ENCODE measurements at regions of chr5 and their contacts with region 1.

Region 1: GRCh38 chr5:146221234-146221633 is 17.8 kb downstream of the RBM27 start:
- DNase-seq: no peak
- ATAC-seq: no peak
- H3K4me3 ChIP-seq: no peak overlapping the region
- H3K4me3 Mint-ChIP-seq: no peak overlapping the region
- H3K27ac ChIP-seq: no peak overlapping the region
- H3K27ac Mint-ChIP-seq: no peak overlapping the region
- H3K4me1 ChIP-seq: peaks cover 0 to 4% of the 10 kb centered on the region in 2 donors
- H3K4me1 Mint-ChIP-seq: peaks cover 5 to 32% (median 25%) of the 10 kb centered on the region in 7 donors
- H3K27me3 ChIP-seq: no peaks in the 10 kb centered on the region
- H3K27me3 Mint-ChIP-seq: no peaks in the 10 kb centered on the region

Region 2: DNA sequence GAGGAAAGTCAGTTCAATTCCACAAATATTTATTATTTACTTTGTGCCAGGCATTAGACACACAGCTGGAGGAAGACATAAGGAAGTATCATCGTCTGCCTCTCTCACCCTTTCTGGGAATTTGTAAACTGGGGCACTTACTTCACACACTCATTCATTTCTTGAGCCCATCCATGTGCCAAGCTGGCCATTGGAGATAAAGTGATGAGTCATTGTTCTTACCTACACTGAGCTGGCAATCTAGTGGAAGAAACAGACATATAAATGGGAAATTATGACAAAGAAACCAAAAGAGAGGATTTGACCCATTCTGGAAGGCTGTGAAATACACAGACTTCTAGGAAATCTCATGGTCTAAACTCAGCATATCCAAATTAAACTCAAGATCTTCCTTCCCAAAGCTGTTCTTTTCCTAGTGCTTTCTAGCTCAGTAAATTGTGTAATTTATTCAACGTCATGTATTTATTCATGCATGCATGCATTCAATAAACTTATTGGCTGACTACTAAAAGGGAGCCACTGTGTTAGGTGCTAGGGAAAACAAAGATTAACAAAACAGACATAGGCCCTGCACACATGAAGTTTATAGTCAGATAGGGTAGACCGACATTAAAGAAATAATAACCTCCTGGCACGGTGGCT is 219.6 kb before region 1 on chr5:
- CTCF ChIA-PET with region 1: no interaction called
- POLR2A ChIA-PET with region 1: no interaction called
- intact Hi-C with region 1: no loop called
- DNase-seq: no peak
- ATAC-seq: no peak
- H3K4me3 ChIP-seq: no peak overlapping the region
- H3K4me3 Mint-ChIP-seq: no peak overlapping the region
- H3K27ac ChIP-seq: no peak overlapping the region
- H3K27ac Mint-ChIP-seq: no peak overlapping the region
- H3K4me1 ChIP-seq: no peaks in the 10 kb centered on the region
- H3K4me1 Mint-ChIP-seq: no peaks in the 10 kb centered on the region
- H3K27me3 ChIP-seq: no peaks in the 10 kb centered on the region
- H3K27me3 Mint-ChIP-seq: peaks cover 7 to 16% (median 12%) of the 10 kb centered on the region in 5 donors

Region 3: GRCh38 chr5:146165460-146165859 is 55.8 kb before region 1 on chr5:
- CTCF ChIA-PET with region 1: no interaction called
- POLR2A ChIA-PET with region 1: no interaction called
- intact Hi-C with region 1: loop called in 1 of 2 experiments (anchors 5 kb)
- DNase-seq: no peak
- ATAC-seq: no peak
- H3K4me3 ChIP-seq: no peak overlapping the region
- H3K4me3 Mint-ChIP-seq: no peak overlapping the region
- H3K27ac ChIP-seq: no peak overlapping the region
- H3K27ac Mint-ChIP-seq: no peak overlapping the region
- H3K4me1 ChIP-seq: no peaks in the 10 kb centered on the region
- H3K4me1 Mint-ChIP-seq: peaks cover 0 to 15% (median 8%) of the 10 kb centered on the region in 7 donors
- H3K27me3 ChIP-seq: no peaks in the 10 kb centered on the region
- H3K27me3 Mint-ChIP-seq: no peaks in the 10 kb centered on the region

Region 4: DNA sequence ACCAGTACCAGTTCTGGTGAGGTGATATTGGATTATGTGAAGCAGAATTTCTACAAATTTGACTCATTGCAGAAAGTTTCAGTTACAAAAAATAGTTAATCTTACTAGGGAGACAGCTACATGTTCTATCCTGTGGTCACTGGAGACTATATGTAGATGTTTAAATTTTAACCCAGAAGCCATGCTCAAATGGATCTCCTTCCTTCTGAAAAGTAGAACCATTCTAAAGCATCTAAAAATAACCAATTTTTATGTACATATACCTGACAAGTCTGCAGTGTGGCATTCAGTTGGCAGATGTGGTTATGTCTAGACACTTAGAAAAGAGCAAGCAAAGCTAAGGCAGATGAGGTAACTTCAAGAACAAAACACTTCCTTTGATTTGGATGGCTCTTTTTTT is 51.9 kb after region 1 on chr5:
- CTCF ChIA-PET with region 1: no interaction called
- POLR2A ChIA-PET with region 1: no interaction called
- intact Hi-C with region 1: no loop called
- DNase-seq: no peak
- ATAC-seq: no peak
- H3K4me3 ChIP-seq: no peak overlapping the region
- H3K4me3 Mint-ChIP-seq: no peak overlapping the region
- H3K27ac ChIP-seq: no peak overlapping the region
- H3K27ac Mint-ChIP-seq: peak overlapping the region in 2 of 9 donors; percentile 66 to 68
- H3K4me1 ChIP-seq: no peaks in the 10 kb centered on the region
- H3K4me1 Mint-ChIP-seq: peaks cover 0 to 2% (median 0%) of the 10 kb centered on the region in 7 donors
- H3K27me3 ChIP-seq: no peaks in the 10 kb centered on the region
- H3K27me3 Mint-ChIP-seq: no peaks in the 10 kb centered on the region

Measured in naive thymus-derived CD4-positive, alpha-beta T cell (primary cell).